K562 (cell line): ENCODE measurements at regions of chr5 and their contacts with region 1.

Region 1: DNA sequence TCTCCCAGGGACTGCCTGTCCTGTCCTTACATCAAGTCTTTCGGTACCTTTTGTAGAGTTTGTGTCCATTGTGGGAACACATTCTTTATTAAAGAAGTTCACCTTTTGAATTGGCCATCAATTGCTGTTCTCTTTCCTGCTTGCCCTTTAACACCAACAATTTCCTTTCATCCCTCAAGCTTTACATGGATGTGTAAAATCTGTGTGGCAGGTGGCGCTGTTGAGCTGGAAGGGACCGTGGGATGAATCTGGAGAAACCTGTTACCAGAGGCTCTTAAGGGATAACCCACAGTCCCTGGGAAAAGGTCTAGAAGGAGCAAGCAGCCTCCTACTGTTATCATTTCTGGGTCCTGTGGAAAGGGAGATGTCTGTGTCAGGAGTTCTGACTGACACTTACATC is 7.9 kb upstream of the ZFP62 start:
- DNase-seq: peak; percentile 64 to 90 (median 74)
- ATAC-seq: peak; percentile 77
- H3K4me3 ChIP-seq: no peak overlapping the region
- H3K27ac ChIP-seq: no peak overlapping the region
- H3K4me1 ChIP-seq: peaks cover 18 to 21% of the 10 kb centered on the region in 2 experiments
- H3K27me3 ChIP-seq: no peaks in the 10 kb centered on the region
- CTCF ChIP-seq: peak; percentile 86 to 94 (median 86)
- EP300 ChIP-seq: peak; percentile 13; the same call in 1 of the 2 replicates
- POLR2A ChIP-seq: no peak
- RAD21 ChIP-seq: peak; percentile 88 to 95

Region 2: DNA sequence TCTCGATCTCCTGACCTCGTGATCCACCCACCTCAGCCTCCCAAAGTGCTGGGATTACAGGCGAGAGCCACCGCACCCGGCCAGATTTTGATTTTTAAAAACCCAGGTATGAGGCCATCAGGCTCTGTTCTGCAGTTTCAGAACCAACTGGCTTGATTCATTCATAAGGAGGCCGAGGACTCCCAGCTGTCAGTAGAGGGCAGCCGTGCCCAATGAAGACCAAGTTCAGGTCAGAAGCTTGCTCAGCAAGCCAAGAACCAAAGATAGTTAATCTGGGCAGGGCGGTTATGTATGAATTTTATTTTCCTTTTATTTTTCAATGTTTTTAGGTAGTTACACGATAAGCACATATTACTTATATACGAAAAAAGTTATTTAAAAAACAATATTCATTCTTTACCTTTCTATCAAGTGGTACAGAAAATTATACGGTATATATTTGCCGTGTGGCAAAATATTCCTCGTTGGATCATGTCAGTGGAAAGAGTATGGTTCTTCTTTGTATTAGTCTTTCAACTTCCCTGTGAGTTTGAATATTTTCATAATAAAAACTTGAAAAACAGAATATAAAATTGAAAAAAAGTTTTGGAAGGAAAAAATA is 84.4 kb before region 1 on chr5:
- CTCF ChIA-PET with region 1: no interaction called
- POLR2A ChIA-PET with region 1: no interaction called
- in situ Hi-C with region 1: no loop called
- intact Hi-C with region 1: loop called (anchors 2 kb)
- DNase-seq: peak; percentile 54 to 85 (median 63)
- ATAC-seq: peak; percentile 72
- H3K4me3 ChIP-seq: no peak overlapping the region
- H3K27ac ChIP-seq: no peak overlapping the region
- H3K4me1 ChIP-seq: peaks cover 38% of the 10 kb centered on the region in 2 experiments; a peak in 4 of 5 replicates
- H3K27me3 ChIP-seq: no peaks in the 10 kb centered on the region
- CTCF ChIP-seq: peak; percentile 75 to 83 (median 76)
- EP300 ChIP-seq: no peak
- POLR2A ChIP-seq: no peak
- RAD21 ChIP-seq: peak; percentile 64 to 83

Region 3: GRCh38 chr5:180848878-180849277 is 20.1 kb before region 1 on chr5:
- CTCF ChIA-PET with region 1: no interaction called
- POLR2A ChIA-PET with region 1: no interaction called
- in situ Hi-C with region 1: no loop called
- intact Hi-C with region 1: no loop called
- DNase-seq: peak in 1 of 4 experiments; percentile 26
- ATAC-seq: no peak
- H3K4me3 ChIP-seq: no peak overlapping the region
- H3K27ac ChIP-seq: no peak overlapping the region
- H3K4me1 ChIP-seq: no peaks in the 10 kb centered on the region
- H3K27me3 ChIP-seq: no peaks in the 10 kb centered on the region
- CTCF ChIP-seq: no peak
- EP300 ChIP-seq: no peak
- POLR2A ChIP-seq: no peak
- RAD21 ChIP-seq: no peak

Region 4: GRCh38 chr5:180910735-180911134 is 41.8 kb after region 1 on chr5:
- CTCF ChIA-PET with region 1: no interaction called
- POLR2A ChIA-PET with region 1: no interaction called
- in situ Hi-C with region 1: no loop called
- intact Hi-C with region 1: no loop called
- DNase-seq: peak in 1 of 4 experiments; percentile 4
- ATAC-seq: no peak
- H3K4me3 ChIP-seq: no peak overlapping the region
- H3K27ac ChIP-seq: no peak overlapping the region
- H3K4me1 ChIP-seq: peaks cover 3 to 9% of the 10 kb centered on the region in 2 experiments; a peak in 4 of 5 replicates
- H3K27me3 ChIP-seq: no peaks in the 10 kb centered on the region
- CTCF ChIP-seq: no peak
- EP300 ChIP-seq: no peak
- POLR2A ChIP-seq: no peak
- RAD21 ChIP-seq: no peak

Region 5: GRCh38 chr5:181028032-181028819 is 159.3 kb after region 1 on chr5:
- CTCF ChIA-PET with region 1: no interaction called
- POLR2A ChIA-PET with region 1: no interaction called
- in situ Hi-C with region 1: no loop called
- intact Hi-C with region 1: loop called (anchors 5 kb)
- DNase-seq: peak; percentile 80 to 97 (median 84)
- ATAC-seq: peak; percentile 93
- H3K4me3 ChIP-seq: peak overlapping the region; percentile 48
- H3K27ac ChIP-seq: peak overlapping the region; percentile 84
- H3K4me1 ChIP-seq: peaks cover 8 to 9% of the 10 kb centered on the region in 2 experiments; a peak in 4 of 5 replicates
- H3K27me3 ChIP-seq: no peaks in the 10 kb centered on the region
- CTCF ChIP-seq: no peak
- EP300 ChIP-seq: peak; percentile 51
- POLR2A ChIP-seq: peak; percentile 99
- RAD21 ChIP-seq: peak in 1 of 2 experiments; percentile 20; a peak in 2 of 4 replicates

Region 6: DNA sequence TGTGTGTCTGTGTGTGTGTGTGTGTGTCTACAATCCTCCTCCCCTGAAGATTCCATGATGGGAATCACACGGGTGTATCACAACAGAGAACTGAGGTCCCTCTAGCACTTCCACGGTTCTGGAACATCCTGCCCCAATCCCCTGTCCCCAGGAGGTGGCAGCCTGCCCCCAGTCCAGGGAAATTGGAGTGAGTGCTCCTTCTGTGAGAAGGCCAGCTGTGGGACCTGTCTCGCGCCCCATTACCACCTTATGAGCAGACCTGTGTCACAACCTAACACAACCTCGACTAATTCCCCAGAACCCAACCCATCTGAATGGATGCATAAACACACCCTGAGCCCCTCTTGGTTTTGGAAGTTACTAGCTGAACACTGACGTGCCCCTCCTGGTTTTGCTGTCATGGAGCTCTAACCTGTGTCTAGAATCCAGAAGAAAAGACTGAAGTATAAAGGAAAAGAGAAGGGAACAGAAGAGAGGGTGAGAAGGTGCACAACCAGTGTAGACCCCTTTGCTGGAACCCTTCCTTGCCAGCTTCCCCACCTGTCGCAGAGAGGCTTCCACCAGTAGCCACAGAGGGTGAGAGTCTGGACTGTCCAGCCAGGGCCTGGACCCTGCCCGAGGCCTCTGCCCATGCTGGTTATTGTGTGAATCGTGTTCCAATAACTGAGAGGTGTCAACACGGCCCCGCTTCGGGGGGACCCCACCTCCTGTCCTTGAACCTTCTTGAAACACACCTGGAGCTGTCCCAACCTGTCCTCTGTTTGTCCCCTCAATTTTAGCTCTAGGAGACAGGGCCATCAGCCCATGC is 174.5 kb after region 1 on chr5:
- CTCF ChIA-PET with region 1: no interaction called
- POLR2A ChIA-PET with region 1: interaction called, 4 read pairs
- in situ Hi-C with region 1: no loop called
- intact Hi-C with region 1: loop called (anchors 2 kb)
- DNase-seq: peak; percentile 31 to 69 (median 52)
- ATAC-seq: peak; percentile 78
- H3K4me3 ChIP-seq: no peak overlapping the region
- H3K27ac ChIP-seq: no peak overlapping the region
- H3K4me1 ChIP-seq: peaks cover 9 to 29% of the 10 kb centered on the region in 2 experiments; a peak in 4 of 5 replicates
- H3K27me3 ChIP-seq: peaks cover 0 to 4% of the 10 kb centered on the region in 2 experiments; a peak in 2 of 5 replicates
- CTCF ChIP-seq: peak; percentile 68 to 81 (median 76); a peak in 5 of 6 replicates
- EP300 ChIP-seq: no peak
- POLR2A ChIP-seq: no peak
- RAD21 ChIP-seq: peak; percentile 53 to 86

Region 7: DNA sequence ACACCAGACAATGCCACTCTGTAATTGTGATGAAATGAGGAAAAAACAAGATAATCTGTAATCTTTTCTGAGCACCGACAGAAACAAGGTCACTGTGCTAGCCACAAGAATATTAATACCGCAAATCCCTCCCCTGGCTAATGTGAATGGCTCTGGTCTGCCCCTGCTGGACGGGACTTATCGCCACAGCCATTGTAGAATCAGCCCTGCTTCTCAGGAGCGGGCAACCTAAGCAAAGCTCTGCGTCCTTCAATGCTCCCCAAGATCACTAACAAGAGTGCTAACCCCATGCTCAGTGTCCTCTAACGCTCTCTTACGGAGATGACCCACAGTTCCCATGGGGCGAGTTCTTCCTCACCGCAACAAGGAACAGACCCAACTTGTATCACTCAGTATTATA is 219.3 kb after region 1 on chr5:
- CTCF ChIA-PET with region 1: no interaction called
- POLR2A ChIA-PET with region 1: no interaction called
- in situ Hi-C with region 1: no loop called
- intact Hi-C with region 1: loop called (anchors 5 kb)
- DNase-seq: peak; percentile 71 to 78 (median 76)
- ATAC-seq: peak; percentile 91
- H3K4me3 ChIP-seq: no peak overlapping the region
- H3K27ac ChIP-seq: no peak overlapping the region
- H3K4me1 ChIP-seq: peaks cover 4 to 9% of the 10 kb centered on the region in 2 experiments; a peak in 3 of 5 replicates
- H3K27me3 ChIP-seq: no peaks in the 10 kb centered on the region
- CTCF ChIP-seq: peak; percentile 67 to 77 (median 72)
- EP300 ChIP-seq: no peak
- POLR2A ChIP-seq: no peak
- RAD21 ChIP-seq: peak; percentile 28 to 60; a peak in 2 of 4 replicates

Region 8: DNA sequence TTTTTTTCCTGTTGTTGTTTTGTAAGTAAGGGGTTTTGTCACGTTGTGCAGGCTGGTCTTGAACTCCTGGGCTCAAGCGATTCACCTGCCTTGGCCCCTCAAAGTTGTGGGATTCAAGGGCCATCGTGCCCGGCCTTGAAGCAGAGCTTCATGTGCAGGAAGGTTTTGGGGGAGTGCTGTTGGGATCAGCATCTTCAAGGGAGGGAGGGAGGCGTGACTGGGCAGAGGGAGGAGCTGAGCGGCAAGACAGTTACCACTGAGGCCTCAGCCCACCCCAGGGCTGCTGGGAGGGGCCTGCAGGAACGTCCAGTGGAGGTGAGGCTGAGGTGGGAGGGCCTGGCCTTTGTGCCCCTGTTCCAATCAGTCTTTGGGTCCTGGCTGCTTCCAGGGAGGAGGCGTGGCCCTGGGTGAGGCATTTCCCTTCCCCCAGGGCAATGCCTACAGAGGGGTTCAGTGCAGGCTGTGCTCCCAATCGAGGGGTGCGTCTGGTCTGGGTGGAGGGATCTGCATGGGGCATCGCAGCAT is 240.6 kb after region 1 on chr5:
- CTCF ChIA-PET with region 1: no interaction called
- POLR2A ChIA-PET with region 1: no interaction called
- in situ Hi-C with region 1: no loop called
- intact Hi-C with region 1: loop called (anchors 5 kb)
- DNase-seq: peak in 3 of 4 experiments; percentile 42 to 51 (median 45)
- ATAC-seq: peak; percentile 12; the same call in 1 of the 3 replicates
- H3K4me3 ChIP-seq: no peak overlapping the region
- H3K27ac ChIP-seq: no peak overlapping the region
- H3K4me1 ChIP-seq: peaks cover 41 to 48% of the 10 kb centered on the region in 2 experiments
- H3K27me3 ChIP-seq: no peaks in the 10 kb centered on the region
- CTCF ChIP-seq: no peak
- EP300 ChIP-seq: no peak
- POLR2A ChIP-seq: no peak
- RAD21 ChIP-seq: no peak

Region 9: DNA sequence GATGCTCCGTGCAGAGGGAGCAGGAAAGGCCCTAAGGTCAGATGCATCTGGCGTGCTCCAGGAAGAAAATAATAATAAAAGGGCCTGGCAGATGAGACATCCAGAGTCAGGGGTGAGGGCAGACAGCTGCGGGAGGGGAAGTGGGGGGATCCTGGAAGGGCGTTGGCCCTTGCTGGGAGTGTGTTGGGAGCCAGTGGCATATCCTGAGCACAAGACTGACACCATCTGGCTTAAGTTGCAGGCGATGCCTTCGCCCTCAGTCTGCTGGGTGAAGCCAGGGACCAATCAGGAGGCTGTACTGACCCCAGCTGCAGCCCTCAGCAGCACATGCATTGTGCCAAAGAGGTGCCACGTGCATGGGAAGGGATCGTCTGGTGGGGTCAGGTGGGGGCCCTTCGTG is 282.2 kb after region 1 on chr5:
- CTCF ChIA-PET with region 1: no interaction called
- POLR2A ChIA-PET with region 1: no interaction called
- in situ Hi-C with region 1: no loop called
- intact Hi-C with region 1: loop called (anchors 2 kb)
- DNase-seq: no peak
- ATAC-seq: peak; percentile 49
- H3K4me3 ChIP-seq: no peak overlapping the region
- H3K27ac ChIP-seq: no peak overlapping the region
- H3K4me1 ChIP-seq: peaks cover 3 to 7% of the 10 kb centered on the region in 2 experiments; a peak in 2 of 5 replicates
- H3K27me3 ChIP-seq: no peaks in the 10 kb centered on the region
- CTCF ChIP-seq: peak in 2 of 3 experiments; percentile 6 to 37; a peak in 2 of 6 replicates
- EP300 ChIP-seq: no peak
- POLR2A ChIP-seq: no peak
- RAD21 ChIP-seq: peak; percentile 15 to 41; a peak in 3 of 4 replicates

Region 10: GRCh38 chr5:181246276-181247050 is 377.5 kb after region 1 on chr5:
- CTCF ChIA-PET with region 1: no interaction called
- POLR2A ChIA-PET with region 1: no interaction called
- in situ Hi-C with region 1: no loop called
- intact Hi-C with region 1: no loop called
- DNase-seq: peak; percentile 90 to 95 (median 92)
- ATAC-seq: peak; percentile 77
- H3K4me3 ChIP-seq: peak overlapping the region; percentile 85
- H3K27ac ChIP-seq: peak overlapping the region; percentile 99
- H3K4me1 ChIP-seq: peaks cover 32 to 40% of the 10 kb centered on the region in 2 experiments; a peak in 4 of 5 replicates
- H3K27me3 ChIP-seq: no peaks in the 10 kb centered on the region
- CTCF ChIP-seq: peak in 1 of 3 experiments; percentile 13; a peak in 1 of 6 replicates
- EP300 ChIP-seq: no peak
- POLR2A ChIP-seq: peak; percentile 78
- RAD21 ChIP-seq: no peak